PC-3 (cell line): ENCODE measurements at regions of chr15 and their contacts with region 1.

Region 1: GRCh38 chr15:41387646-41388045 is 14.7 kb downstream of the NDUFAF1 start:
- DNase-seq: no peak
- ATAC-seq: no peak
- H3K4me3 ChIP-seq: no peak overlapping the region
- H3K27ac ChIP-seq: no peak overlapping the region
- H3K4me1 ChIP-seq: no peaks in the 10 kb centered on the region
- H3K27me3 ChIP-seq: no peaks in the 10 kb centered on the region
- CTCF ChIP-seq: no peak

Region 2: DNA sequence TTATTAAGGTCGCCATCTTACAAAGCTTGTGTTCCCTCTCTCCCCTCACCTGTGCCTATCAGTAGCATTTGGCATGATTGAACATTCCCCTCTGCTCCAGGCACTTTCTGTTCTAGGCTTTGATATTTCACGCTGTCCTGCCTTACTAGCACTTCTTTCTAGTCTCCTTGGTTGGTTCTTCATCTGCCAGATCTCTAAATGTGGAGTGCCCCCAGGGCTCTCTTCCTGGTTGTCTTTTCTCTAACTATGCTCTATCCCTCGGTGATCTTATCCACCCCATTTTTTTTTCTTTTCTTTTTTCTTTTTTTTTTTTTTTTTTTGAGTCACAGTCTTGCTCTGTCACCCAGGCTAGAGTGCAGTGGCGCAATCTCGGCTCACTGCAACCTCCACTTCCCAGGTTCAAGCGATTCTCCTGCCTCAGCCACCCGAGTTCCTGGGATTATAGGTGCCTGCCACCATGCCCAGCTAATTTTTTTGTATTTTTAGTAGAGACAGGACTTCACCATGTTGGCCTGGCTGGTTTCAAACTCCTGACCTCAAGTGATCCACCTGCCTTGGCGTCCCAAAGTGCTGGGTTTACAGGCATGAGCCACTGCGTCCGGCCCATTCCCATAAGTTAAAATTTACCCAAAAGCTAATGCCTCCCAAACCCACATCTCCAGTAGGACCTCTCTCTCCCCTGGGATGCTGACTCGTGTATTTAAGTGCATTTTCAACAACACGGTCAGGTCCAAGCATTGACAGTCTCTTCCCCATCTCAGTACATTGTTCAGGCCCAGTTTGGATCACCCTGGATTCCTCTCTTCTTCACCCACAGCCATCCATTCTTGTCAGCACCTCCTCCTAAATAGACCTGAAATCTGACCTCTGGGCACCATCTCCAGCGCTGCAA is 49.8 kb before region 1 on chr15:
- CTCF ChIA-PET with region 1: no interaction called
- POLR2A ChIA-PET with region 1: interaction called, 11 read pairs
- intact Hi-C with region 1: no loop called
- DNase-seq: no peak
- ATAC-seq: no peak
- H3K4me3 ChIP-seq: no peak overlapping the region
- H3K27ac ChIP-seq: no peak overlapping the region
- H3K4me1 ChIP-seq: peaks cover 19% of the 10 kb centered on the region
- H3K27me3 ChIP-seq: no peaks in the 10 kb centered on the region
- CTCF ChIP-seq: no peak